Aorta (tissue), 5 donors: ENCODE measurements at regions of chr6 and their contacts with region 1.

Region 1: GRCh38 chr6:158060455-158061360 is 79.0 kb downstream of the SYNJ2 start:
- DNase-seq: peak; percentile 97 to 98
- ATAC-seq: peak; percentile 89
- H3K4me3 ChIP-seq: no peak overlapping the region
- H3K27ac ChIP-seq: peak overlapping the region; percentile 73 to 99
- H3K4me1 ChIP-seq: no peaks in the 10 kb centered on the region
- H3K27me3 ChIP-seq: no peaks in the 10 kb centered on the region

Region 2: DNA sequence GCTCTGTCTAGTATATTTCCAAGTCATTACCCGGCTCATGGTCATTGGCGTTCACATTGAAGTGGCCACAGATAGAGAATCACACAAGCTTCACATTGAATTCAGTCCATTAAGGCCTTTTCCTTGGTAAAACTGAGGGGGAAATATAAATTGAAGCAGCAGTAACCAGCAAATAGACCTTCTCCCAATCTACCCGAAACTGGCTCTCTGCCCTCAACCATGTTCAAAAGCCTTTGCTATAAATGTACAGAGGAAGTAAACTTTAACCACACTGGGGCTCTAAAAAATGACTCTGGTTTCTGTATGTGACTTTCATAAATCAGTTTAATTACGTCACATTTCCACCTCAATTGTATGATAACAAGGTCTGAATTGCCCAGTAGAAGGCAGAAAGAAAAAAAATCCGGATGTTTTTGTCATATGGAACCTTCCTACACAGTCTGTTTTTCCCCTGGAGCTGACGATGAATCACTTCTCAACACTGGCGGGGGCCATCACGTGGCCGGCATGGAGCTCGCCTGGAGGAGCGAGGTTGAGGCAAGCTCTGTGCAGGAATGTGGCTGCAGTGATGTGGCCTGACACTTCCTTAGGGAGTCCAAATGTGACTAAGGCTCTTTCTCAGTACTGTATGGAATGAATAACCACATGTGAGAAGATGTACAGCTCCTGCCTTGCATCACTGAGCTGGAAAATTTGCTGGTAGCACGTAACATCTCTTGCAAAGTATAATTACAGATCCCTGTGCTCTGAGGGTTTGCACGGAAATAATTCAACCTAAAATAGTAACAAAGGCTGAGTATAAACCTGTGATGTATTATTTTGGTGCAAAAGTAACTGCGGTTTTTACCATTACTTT is 296.3 kb before region 1 on chr6:
- intact Hi-C with region 1: loop called (anchors 10 kb)
- DNase-seq: peak; percentile 93 to 96
- ATAC-seq: peak; percentile 89
- H3K4me3 ChIP-seq: no peak overlapping the region
- H3K27ac ChIP-seq: peak overlapping the region; percentile 72 to 75
- H3K4me1 ChIP-seq: peaks cover 5 to 7% of the 10 kb centered on the region in 2 donors
- H3K27me3 ChIP-seq: no peaks in the 10 kb centered on the region

Region 3: GRCh38 chr6:158040051-158040803 is 20.5 kb before region 1 on chr6:
- intact Hi-C with region 1: loop called in 1 of 2 experiments (anchors 2 kb)
- DNase-seq: peak; percentile 62 to 69
- ATAC-seq: peak; percentile 74
- H3K4me3 ChIP-seq: no peak overlapping the region
- H3K27ac ChIP-seq: peak overlapping the region; percentile 68 to 99
- H3K4me1 ChIP-seq: peaks cover 2 to 10% of the 10 kb centered on the region in 2 donors
- H3K27me3 ChIP-seq: no peaks in the 10 kb centered on the region

Region 4: DNA sequence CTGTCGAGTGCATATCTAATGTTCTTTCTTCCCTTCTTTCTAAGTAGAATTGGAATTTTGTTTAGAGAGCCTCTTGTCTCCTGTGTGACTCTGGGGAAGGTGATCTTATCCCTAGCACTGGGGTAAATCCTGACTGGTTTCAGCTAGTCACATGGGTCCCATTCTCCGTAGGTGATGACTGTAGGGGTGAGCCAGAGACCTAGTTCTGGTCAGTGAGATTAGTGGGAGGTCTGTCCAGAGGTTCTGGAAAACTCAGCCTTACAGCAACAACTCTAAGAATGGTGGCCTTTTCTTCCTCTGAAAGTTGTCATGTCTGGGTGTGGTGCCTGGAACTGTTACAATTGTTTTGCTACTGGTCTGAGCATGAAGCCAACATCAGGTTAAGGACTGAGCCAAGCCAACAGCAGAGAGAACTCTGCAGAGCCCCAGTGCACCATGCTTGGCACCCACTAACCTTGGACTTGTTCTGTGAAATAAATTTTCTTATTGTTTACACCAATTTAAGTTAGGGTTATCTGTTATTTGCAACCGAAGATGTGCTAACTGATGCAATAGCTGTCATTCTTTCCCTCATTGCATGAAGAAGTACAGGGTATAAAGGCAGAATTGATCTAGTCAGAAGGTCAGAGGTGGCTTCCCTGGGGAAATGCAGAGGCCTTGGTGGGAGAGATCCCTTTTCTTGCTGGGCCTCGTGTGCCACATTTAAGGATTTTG is 194.7 kb after region 1 on chr6:
- intact Hi-C with region 1: no loop called
- DNase-seq: no peak
- ATAC-seq: no peak
- H3K4me3 ChIP-seq: no peak overlapping the region
- H3K27ac ChIP-seq: no peak overlapping the region
- H3K4me1 ChIP-seq: peaks cover 0 to 3% of the 10 kb centered on the region in 2 donors
- H3K27me3 ChIP-seq: no peaks in the 10 kb centered on the region